Activated T-helper 1 cell treated with anti-CD3 and anti-CD28 coated beads, Interleukin-12 subunit alpha, Interleukin-12 subunit beta, Interleukin-2, Interleukin-4 antibody, amounts not matched to agents 30 ng/mL and 10 ng/mL and 1 ng/mL, durations not matched to agents 14 hours and 24 hours and 36 hours (primary cell): ENCODE measurements at regions of chr9 and their contacts with region 1.

Region 1: DNA sequence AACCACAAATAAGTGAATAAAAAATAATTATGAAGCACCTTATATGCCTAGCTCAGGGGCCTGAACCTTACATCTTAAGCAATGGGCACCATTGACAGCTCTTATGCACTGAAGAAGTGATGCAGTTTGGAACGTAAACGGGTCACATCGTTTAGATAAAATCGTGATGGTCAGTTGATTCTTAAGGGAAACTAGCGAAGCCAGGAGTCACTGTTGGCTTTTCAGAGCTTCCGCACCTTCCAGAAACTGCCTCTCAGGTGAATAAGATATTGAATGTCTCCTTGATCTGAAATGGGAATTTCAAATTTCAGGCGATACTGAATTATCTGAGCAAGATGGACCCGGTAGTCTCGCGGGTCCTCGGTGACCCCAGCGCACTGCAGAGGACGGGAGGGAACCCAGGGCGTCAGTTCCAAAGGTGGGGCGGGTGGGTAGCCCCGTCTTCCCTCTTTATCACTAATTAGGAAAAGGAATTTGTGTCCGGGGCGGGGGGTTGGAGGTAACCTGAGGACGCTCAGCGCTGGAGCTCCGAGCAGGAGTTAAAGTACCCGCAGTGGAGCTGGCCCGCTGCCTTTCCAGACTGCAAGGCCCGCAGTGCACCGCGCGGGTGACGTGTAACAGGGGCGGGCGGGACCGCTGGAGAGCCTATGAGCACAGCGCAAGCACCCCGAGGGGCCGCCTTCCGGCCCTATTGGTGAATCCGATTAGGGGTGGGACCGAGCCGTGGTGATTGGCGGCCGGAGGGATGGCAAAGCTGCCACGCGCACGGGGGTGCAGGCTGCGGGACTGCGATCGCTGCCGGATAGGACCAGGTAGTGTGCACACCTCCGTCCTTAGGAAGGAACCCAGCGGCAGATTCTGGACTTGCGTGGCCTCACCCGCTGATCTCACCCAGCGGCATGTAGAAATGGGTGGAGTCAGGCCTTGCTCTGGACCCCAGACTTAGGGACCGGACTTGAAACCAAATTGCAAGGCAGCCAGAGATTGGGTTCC is 19.7 kb upstream of the GARNL3 start:
- DNase-seq: peak; percentile 94
- H3K4me3 Mint-ChIP-seq: peak overlapping the region; percentile 83
- H3K27ac Mint-ChIP-seq: peak overlapping the region; percentile 21
- H3K4me1 Mint-ChIP-seq: peaks cover 12% of the 10 kb centered on the region
- H3K27me3 Mint-ChIP-seq: peaks cover 9% of the 10 kb centered on the region

Region 2: GRCh38 chr9:126914458-126915280 is 330.2 kb before region 1 on chr9 and contains the start of gene RALGPS1:
- intact Hi-C with region 1: loop called (anchors 1 kb)
- DNase-seq: peak; percentile 91
- H3K4me3 Mint-ChIP-seq: peak within 1 kb of the TSS; percentile 73
- H3K27ac Mint-ChIP-seq: no peak within 1 kb of the TSS
- H3K4me1 Mint-ChIP-seq: peaks cover 6% of the 10 kb centered on the region
- H3K27me3 Mint-ChIP-seq: peaks cover 17% of the 10 kb centered on the region
- total RNA-seq, gene RALGPS1: 1.4 and 1.8 TPM in 2 replicates